ENCODE measurements at regions of chr6 and their contacts with region 1.

Region 1: DNA sequence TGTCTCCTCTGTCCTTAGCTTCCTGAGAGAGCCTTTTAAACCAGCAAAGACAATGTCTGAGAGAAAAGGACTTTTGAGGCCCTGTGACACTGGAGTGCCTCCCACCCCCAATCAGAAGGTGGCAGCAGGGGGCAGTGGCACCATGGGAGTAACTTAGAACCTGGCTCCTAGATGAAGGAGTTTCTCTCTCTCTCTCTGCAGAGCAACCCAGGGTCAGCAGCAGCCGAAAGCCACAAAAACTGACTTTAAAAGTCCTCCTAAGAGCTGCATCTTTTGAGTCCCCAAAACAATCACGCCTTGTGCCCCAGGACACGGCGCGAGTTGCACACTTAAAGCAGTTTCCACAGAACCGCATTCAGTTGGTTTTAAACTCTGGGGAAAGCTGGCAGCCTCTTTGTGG is 5.3 kb upstream of the TCP11 start:
- DNase-seq: peak in 1 of 2 donors; percentile 18
- ATAC-seq: peak; percentile 60 to 71
- H3K4me3 ChIP-seq: no peak overlapping the region
- H3K27ac ChIP-seq: no peak overlapping the region
- H3K4me1 ChIP-seq: no peaks in the 10 kb centered on the region
- H3K27me3 ChIP-seq: peaks cover 0 to 5% (median 0%) of the 10 kb centered on the region in 3 donors
- CTCF ChIP-seq: peak in 2 of 5 experiments; percentile 22 to 47
- POLR2A ChIP-seq: no peak

Region 2: DNA sequence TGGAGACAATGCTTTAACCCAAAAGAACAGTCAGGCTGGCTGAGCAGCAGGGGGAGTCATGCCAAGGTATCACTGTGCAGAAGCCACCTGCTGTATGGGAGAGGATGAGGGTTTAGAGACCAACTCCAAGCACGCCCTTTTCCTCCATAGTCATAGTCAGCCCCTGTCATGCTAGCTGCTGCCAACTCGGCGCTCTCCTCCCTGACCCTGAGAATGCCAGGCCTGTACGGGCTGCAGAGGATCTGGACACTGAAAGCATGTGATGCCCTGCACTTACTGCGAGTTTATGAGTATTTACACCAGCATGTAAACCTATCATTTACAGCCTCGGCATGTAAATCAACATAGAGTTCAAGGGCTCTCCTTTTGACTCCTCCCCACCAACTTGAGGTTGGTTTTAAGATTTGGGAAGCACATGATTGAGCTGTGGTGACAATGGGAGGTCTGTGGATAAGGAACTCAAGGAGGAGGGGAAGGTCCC is 55.7 kb after region 1 on chr6:
- in situ Hi-C with region 1: loop called in 1 of 4 experiments (anchors 10 kb)
- intact Hi-C with region 1: loop called (anchors 1 kb)
- DNase-seq: no peak
- ATAC-seq: no peak
- H3K4me3 ChIP-seq: no peak overlapping the region
- H3K27ac ChIP-seq: no peak overlapping the region
- H3K4me1 ChIP-seq: no peaks in the 10 kb centered on the region
- H3K27me3 ChIP-seq: peaks cover 0 to 13% (median 12%) of the 10 kb centered on the region in 3 donors
- CTCF ChIP-seq: no peak
- POLR2A ChIP-seq: no peak

Region 3: GRCh38 chr6:35218021-35218420 is 71.6 kb after region 1 on chr6:
- in situ Hi-C with region 1: no loop called
- intact Hi-C with region 1: no loop called
- DNase-seq: no peak
- ATAC-seq: no peak
- H3K4me3 ChIP-seq: no peak overlapping the region
- H3K27ac ChIP-seq: no peak overlapping the region
- H3K4me1 ChIP-seq: peaks cover 16 to 21% of the 10 kb centered on the region in 2 donors
- H3K27me3 ChIP-seq: peaks cover 35 to 49% (median 48%) of the 10 kb centered on the region in 3 donors
- CTCF ChIP-seq: no peak
- POLR2A ChIP-seq: no peak

Region 4: GRCh38 chr6:35240840-35241801 is 94.7 kb after region 1 on chr6:
- in situ Hi-C with region 1: no loop called
- intact Hi-C with region 1: loop called (anchors 1 kb)
- DNase-seq: peak in 1 of 2 donors; percentile 45
- ATAC-seq: peak; percentile 59 to 83
- H3K4me3 ChIP-seq: no peak overlapping the region
- H3K27ac ChIP-seq: no peak overlapping the region
- H3K4me1 ChIP-seq: peaks cover 0 to 3% of the 10 kb centered on the region in 2 donors
- H3K27me3 ChIP-seq: no peaks in the 10 kb centered on the region
- CTCF ChIP-seq: peak; percentile 82 to 92 (median 86)
- POLR2A ChIP-seq: no peak

Region 5: GRCh38 chr6:35287671-35288396 is 141.4 kb after region 1 on chr6:
- in situ Hi-C with region 1: no loop called
- intact Hi-C with region 1: no loop called
- DNase-seq: peak in 1 of 2 donors; percentile 41
- ATAC-seq: peak; percentile 66 to 83
- H3K4me3 ChIP-seq: no peak overlapping the region
- H3K27ac ChIP-seq: peak overlapping the region; percentile 59 to 81 (median 73)
- H3K4me1 ChIP-seq: peaks cover 25 to 41% of the 10 kb centered on the region in 2 donors
- H3K27me3 ChIP-seq: no peaks in the 10 kb centered on the region
- CTCF ChIP-seq: no peak
- POLR2A ChIP-seq: no peak

Region 6: DNA sequence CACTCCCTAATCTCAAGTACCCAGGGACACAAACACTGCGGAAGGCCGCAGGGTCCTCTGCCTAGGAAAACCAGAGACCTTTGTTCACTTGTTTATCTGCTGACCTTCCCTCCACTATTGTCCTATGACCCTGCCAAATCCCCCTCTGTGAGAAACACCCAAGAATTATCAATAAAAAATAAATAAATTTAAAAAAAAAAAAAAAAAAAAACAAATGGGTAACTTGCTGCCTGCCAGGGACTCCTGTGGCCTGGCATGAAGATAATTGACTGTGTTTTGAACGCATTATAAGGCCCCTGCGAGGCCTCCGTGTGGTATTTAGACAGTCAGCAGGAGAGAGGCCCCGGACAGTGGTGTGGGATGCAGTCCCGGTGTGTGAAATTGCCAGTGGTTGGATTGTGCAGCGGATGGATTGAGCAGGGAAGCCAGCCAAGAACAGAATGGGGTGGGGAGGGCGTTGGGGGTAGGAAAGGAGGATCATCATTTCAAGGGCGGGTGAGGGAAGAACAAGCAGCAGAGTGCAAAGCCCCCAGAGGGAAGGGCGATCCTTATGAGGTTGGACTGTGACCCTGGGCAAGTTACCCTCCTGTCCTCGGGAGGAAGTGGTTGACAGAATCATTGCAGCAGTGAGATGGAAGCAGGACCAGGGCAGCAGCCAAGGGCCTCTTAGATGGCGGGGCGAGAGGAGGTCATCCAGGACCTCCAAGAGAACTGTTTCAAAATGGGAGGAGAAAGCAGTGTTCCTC is 239.2 kb after region 1 on chr6:
- in situ Hi-C with region 1: no loop called
- intact Hi-C with region 1: no loop called
- DNase-seq: no peak
- ATAC-seq: no peak
- H3K4me3 ChIP-seq: no peak overlapping the region
- H3K27ac ChIP-seq: no peak overlapping the region
- H3K4me1 ChIP-seq: peaks cover 5 to 14% of the 10 kb centered on the region in 2 donors
- H3K27me3 ChIP-seq: no peaks in the 10 kb centered on the region
- CTCF ChIP-seq: no peak
- POLR2A ChIP-seq: no peak

Measured in gastrocnemius medialis (tissue), 4 donors.